ENCODE measurements at regions of chr2 and their contacts with region 1.

Region 1: GRCh38 chr2:55617175-55618024 is at the start of gene PPP4R3B:
- DNase-seq: peak; percentile 98
- ATAC-seq: peak; percentile 89
- H3K4me3 ChIP-seq: peak within 1 kb of the TSS; percentile 89
- H3K27ac ChIP-seq: peak within 1 kb of the TSS; percentile 94
- H3K4me1 ChIP-seq: peaks cover 3% of the 10 kb centered on the region
- H3K27me3 ChIP-seq: no peaks in the 10 kb centered on the region
- CTCF ChIP-seq: peak; percentile 32 to 33 (median 32); a peak in 4 of 6 replicates
- EP300 ChIP-seq: no peak
- POLR2A ChIP-seq: peak; percentile 98
- RAD21 ChIP-seq: no peak
- polyA plus RNA-seq, gene PPP4R3B: 10.9 to 15.3 TPM

Region 2: GRCh38 chr2:55232084-55232862 is 385.1 kb before region 1 on chr2 and contains the starts of genes CLHC1 and RPS27A:
- CTCF ChIA-PET with region 1: no interaction called
- POLR2A ChIA-PET with region 1: no interaction called
- RAD21 ChIA-PET with region 1: no interaction called
- SMC1A ChIA-PET with region 1: no interaction called
- in situ Hi-C with region 1: no loop called
- intact Hi-C with region 1: loop called (anchors 5 kb)
- DNase-seq: peak; percentile 85
- ATAC-seq: peak; percentile 85
- H3K4me3 ChIP-seq: peak within 1 kb of the TSS; percentile 93
- H3K27ac ChIP-seq: peak within 1 kb of the TSS; percentile 98
- H3K4me1 ChIP-seq: peaks cover 3% of the 10 kb centered on the region; the same call in 1 of the 2 replicates
- H3K27me3 ChIP-seq: no peaks in the 10 kb centered on the region
- CTCF ChIP-seq: no peak
- EP300 ChIP-seq: 0 out of 4 replicates have a peak, but pooled peaks of 1 of the 2 experiments have one; percentile 19
- POLR2A ChIP-seq: peak; percentile 98
- RAD21 ChIP-seq: no peak
- polyA plus RNA-seq, gene CLHC1: 2.6 to 3.2 TPM
- polyA plus RNA-seq, gene RPS27A: 3,416 to 4,705 TPM

Region 3: DNA sequence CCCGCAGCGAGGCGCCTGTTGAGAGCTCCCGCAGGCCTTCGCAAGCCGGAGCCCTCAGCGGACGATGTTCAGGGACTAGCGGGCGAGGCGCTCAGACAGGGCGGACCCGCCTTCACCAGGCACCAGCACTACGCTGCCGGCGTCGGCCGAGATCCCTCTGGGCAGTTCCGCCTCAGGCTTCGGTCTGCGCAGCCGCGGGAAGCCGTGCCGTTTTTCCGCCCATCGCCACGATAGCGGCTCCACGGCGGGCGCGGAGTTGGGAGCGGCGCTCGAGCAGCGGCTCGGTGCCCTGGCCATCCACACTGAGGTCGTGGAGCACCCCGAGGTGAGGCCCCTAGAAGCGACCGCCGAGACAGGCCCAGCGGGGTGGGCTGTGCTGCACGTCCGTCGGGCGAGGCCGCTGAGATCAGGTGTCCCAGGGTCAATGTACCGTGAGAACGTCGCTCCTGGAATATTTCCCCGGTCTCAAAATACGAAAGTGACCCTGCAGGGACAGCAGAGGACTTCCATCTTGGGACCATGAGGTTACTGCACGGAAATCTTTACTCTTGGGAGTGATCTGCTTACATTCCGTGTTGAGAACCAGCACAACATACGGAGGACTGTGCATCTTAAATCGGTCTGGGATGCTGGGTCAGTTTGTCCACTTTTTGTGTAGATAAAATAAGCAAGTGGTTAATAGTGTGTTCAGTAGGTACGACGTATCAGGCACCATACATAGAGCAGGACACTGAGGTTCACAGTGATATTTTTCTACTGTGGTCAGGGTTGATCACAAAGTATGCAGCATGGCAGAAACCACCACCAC is 335.1 kb before region 1 on chr2:
- CTCF ChIA-PET with region 1: no interaction called
- POLR2A ChIA-PET with region 1: no interaction called
- RAD21 ChIA-PET with region 1: no interaction called
- SMC1A ChIA-PET with region 1: no interaction called
- in situ Hi-C with region 1: no loop called
- intact Hi-C with region 1: loop called (anchors 10 kb)
- DNase-seq: peak; percentile 56
- ATAC-seq: peak; percentile 99
- H3K4me3 ChIP-seq: peak overlapping the region; percentile 77
- H3K27ac ChIP-seq: peak overlapping the region; percentile 69
- H3K4me1 ChIP-seq: peaks cover 4% of the 10 kb centered on the region; the same call in 1 of the 2 replicates
- H3K27me3 ChIP-seq: no peaks in the 10 kb centered on the region
- CTCF ChIP-seq: no peak
- EP300 ChIP-seq: no peak
- POLR2A ChIP-seq: peak; percentile 98
- RAD21 ChIP-seq: no peak

Region 4: GRCh38 chr2:55519938-55520885 is 97.2 kb before region 1 on chr2:
- CTCF ChIA-PET with region 1: interaction called, 6 read pairs
- POLR2A ChIA-PET with region 1: interaction called, 23 read pairs
- RAD21 ChIA-PET with region 1: interaction called, 8 read pairs
- SMC1A ChIA-PET with region 1: interaction called, 9 read pairs
- in situ Hi-C with region 1: no loop called
- intact Hi-C with region 1: no loop called
- DNase-seq: no peak
- ATAC-seq: peak; percentile 34
- H3K4me3 ChIP-seq: peak overlapping the region; percentile 88
- H3K27ac ChIP-seq: peak overlapping the region; percentile 36; the same call in 1 of the 2 replicates
- H3K4me1 ChIP-seq: no peaks in the 10 kb centered on the region
- H3K27me3 ChIP-seq: no peaks in the 10 kb centered on the region
- CTCF ChIP-seq: no peak
- EP300 ChIP-seq: no peak
- POLR2A ChIP-seq: no peak
- RAD21 ChIP-seq: no peak

Region 5: GRCh38 chr2:55636831-55637230 is 19.4 kb after region 1 on chr2:
- CTCF ChIA-PET with region 1: no interaction called
- POLR2A ChIA-PET with region 1: no interaction called
- RAD21 ChIA-PET with region 1: no interaction called
- SMC1A ChIA-PET with region 1: no interaction called
- in situ Hi-C with region 1: no loop called
- intact Hi-C with region 1: no loop called
- DNase-seq: no peak
- ATAC-seq: no peak
- H3K4me3 ChIP-seq: no peak overlapping the region
- H3K27ac ChIP-seq: no peak overlapping the region
- H3K4me1 ChIP-seq: no peaks in the 10 kb centered on the region
- H3K27me3 ChIP-seq: no peaks in the 10 kb centered on the region
- CTCF ChIP-seq: no peak
- EP300 ChIP-seq: no peak
- POLR2A ChIP-seq: no peak
- RAD21 ChIP-seq: no peak

Region 6: GRCh38 chr2:55804535-55804934 is 187.1 kb after region 1 on chr2:
- CTCF ChIA-PET with region 1: no interaction called
- POLR2A ChIA-PET with region 1: no interaction called
- RAD21 ChIA-PET with region 1: no interaction called
- SMC1A ChIA-PET with region 1: no interaction called
- in situ Hi-C with region 1: no loop called
- intact Hi-C with region 1: no loop called
- DNase-seq: no peak
- ATAC-seq: peak; percentile 48
- H3K4me3 ChIP-seq: no peak overlapping the region
- H3K27ac ChIP-seq: no peak overlapping the region
- H3K4me1 ChIP-seq: no peaks in the 10 kb centered on the region
- H3K27me3 ChIP-seq: 0 out of 4 replicates have a peak, but pooled peaks cover 0 to 4% of the 10 kb centered on the region in 2 experiments
- CTCF ChIP-seq: no peak
- EP300 ChIP-seq: no peak
- POLR2A ChIP-seq: no peak
- RAD21 ChIP-seq: no peak

Region 7: DNA sequence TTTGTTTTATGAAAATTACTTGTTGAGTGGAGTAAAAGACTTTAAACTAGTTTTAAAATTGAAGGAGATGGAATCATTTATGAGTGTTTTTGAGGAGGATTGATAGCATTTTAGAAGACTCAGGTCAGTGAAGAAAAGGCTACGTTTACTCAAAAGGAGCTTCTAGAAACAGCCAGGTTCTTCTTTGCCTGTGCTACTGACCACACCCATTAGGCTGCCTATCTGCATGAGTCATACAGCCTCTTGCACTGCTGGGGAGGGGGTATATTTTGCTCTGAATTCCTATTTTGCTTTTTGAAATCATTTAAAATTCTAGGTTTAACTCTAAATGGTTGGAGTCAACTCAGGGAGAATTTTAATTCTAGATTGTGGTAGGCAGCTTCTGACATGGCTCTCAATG is 283.9 kb after region 1 on chr2:
- CTCF ChIA-PET with region 1: no interaction called
- POLR2A ChIA-PET with region 1: no interaction called
- RAD21 ChIA-PET with region 1: no interaction called
- SMC1A ChIA-PET with region 1: no interaction called
- in situ Hi-C with region 1: no loop called
- intact Hi-C with region 1: no loop called
- DNase-seq: no peak
- ATAC-seq: no peak
- H3K4me3 ChIP-seq: no peak overlapping the region
- H3K27ac ChIP-seq: no peak overlapping the region
- H3K4me1 ChIP-seq: no peaks in the 10 kb centered on the region
- H3K27me3 ChIP-seq: no peaks in the 10 kb centered on the region
- CTCF ChIP-seq: no peak
- EP300 ChIP-seq: no peak
- POLR2A ChIP-seq: no peak
- RAD21 ChIP-seq: no peak

Measured in GM12878 (cell line).